A673 (cell line): ENCODE measurements at regions of chr12 and their contacts with region 1.

Region 1: DNA sequence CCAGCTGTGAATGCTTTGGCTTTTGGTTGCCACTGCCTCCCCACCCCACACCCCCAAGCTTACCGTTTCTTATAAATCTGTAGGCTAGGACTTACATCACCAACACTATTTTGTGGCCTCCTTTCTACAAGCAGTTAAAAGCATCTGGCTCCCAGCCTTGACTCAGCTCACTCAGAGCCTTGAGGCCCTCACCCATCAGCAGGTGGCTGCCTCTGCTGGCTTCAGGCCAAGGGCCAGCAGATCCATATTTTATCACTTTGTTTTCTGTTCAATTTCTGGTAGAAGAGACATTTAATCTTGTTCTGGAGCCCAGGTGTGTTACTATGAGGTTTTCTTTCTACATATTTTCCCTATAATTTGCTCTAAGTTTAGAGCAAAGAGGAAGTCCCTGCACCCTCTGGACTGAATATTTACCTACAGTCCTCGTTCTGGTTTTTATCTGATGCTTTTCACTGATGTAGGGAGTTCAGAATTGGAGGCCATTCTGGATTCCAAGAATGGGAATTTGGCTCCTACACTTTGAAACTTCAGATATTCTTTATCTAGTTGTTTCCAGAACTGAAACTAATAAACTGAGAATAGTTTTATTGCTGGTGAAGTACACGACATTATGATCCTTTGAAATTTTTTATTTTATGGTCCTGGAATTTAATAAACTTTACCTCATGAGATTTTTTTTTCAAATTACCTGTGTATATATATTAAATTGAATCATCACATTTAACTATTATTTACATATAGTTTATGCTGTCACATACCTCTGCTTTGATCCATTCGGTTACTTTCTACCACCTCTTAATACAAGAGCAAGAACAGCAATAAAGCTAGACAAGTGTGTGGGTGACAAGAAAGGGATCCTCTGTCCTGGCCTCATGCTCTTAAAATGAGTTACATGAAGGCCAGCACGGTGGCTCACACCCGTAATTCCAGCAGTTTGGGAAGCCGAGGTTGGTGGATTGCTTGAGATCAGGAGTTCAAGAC is 22.2 kb downstream of the PLBD1 start:
- DNase-seq: no peak
- H3K4me3 ChIP-seq: no peak overlapping the region
- H3K27ac ChIP-seq: no peak overlapping the region
- H3K4me1 ChIP-seq: no peaks in the 10 kb centered on the region
- H3K27me3 ChIP-seq: no peaks in the 10 kb centered on the region
- CTCF ChIP-seq: no peak

Region 2: GRCh38 chr12:14884458-14884878 is 339.0 kb after region 1 on chr12:
- CTCF ChIA-PET with region 1: no interaction called
- POLR2A ChIA-PET with region 1: no interaction called
- intact Hi-C with region 1: no loop called
- DNase-seq: peak; percentile 80
- H3K4me3 ChIP-seq: peak overlapping the region; percentile 8
- H3K27ac ChIP-seq: no peak overlapping the region
- H3K4me1 ChIP-seq: peaks cover 19% of the 10 kb centered on the region
- H3K27me3 ChIP-seq: no peaks in the 10 kb centered on the region
- CTCF ChIP-seq: no peak

Region 3: GRCh38 chr12:15001733-15002382 is 456.4 kb after region 1 on chr12:
- CTCF ChIA-PET with region 1: no interaction called
- POLR2A ChIA-PET with region 1: interaction called, 13 read pairs
- intact Hi-C with region 1: no loop called
- DNase-seq: no peak
- H3K4me3 ChIP-seq: no peak overlapping the region
- H3K27ac ChIP-seq: no peak overlapping the region
- H3K4me1 ChIP-seq: no peaks in the 10 kb centered on the region
- H3K27me3 ChIP-seq: no peaks in the 10 kb centered on the region
- CTCF ChIP-seq: no peak